MCF 10A (cell line): ENCODE measurements at regions of chr1 and their contacts with region 1.

Region 1: GRCh38 chr1:200302192-200302920 is 107.5 kb downstream of the ZNF281 start:
- DNase-seq: peak; percentile 49
- H3K4me3 Mint-ChIP-seq: peak overlapping the region; percentile 73
- H3K27ac Mint-ChIP-seq: no peak overlapping the region
- H3K4me1 Mint-ChIP-seq: peaks cover 2% of the 10 kb centered on the region
- H3K27me3 Mint-ChIP-seq: no peaks in the 10 kb centered on the region
- CTCF ChIP-seq: no peak

Region 2: DNA sequence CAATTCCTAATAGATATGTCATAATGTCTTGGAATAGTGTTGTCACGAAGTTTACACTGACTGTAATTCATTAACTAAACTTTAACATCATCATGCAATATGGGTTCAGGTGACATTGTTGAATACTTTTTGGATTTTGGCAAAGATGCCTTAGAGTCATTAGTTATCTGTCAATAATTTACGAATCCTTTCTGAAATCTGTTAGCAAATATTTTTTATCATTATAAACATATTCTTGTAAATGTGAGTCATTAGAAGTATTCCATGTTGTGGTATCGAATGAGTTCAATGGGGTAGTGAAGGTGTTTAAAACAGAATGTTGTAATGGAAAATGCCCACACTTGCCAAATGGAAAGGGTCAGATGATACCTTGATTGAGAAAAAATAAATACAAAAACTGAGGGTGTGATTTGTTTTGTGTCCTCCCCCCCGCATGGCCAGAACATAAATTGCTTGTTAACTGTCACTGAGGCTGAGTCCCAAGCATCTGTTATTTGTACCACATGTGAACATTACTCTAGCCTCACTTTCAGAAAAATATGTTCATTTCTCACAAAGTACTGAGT is 280.0 kb before region 1 on chr1:
- CTCF ChIA-PET with region 1: no interaction called
- POLR2A ChIA-PET with region 1: no interaction called
- intact Hi-C with region 1: no loop called
- DNase-seq: no peak
- H3K4me3 Mint-ChIP-seq: no peak overlapping the region
- H3K27ac Mint-ChIP-seq: no peak overlapping the region
- H3K4me1 Mint-ChIP-seq: peaks cover 4% of the 10 kb centered on the region
- H3K27me3 Mint-ChIP-seq: no peaks in the 10 kb centered on the region
- CTCF ChIP-seq: no peak

Region 3: DNA sequence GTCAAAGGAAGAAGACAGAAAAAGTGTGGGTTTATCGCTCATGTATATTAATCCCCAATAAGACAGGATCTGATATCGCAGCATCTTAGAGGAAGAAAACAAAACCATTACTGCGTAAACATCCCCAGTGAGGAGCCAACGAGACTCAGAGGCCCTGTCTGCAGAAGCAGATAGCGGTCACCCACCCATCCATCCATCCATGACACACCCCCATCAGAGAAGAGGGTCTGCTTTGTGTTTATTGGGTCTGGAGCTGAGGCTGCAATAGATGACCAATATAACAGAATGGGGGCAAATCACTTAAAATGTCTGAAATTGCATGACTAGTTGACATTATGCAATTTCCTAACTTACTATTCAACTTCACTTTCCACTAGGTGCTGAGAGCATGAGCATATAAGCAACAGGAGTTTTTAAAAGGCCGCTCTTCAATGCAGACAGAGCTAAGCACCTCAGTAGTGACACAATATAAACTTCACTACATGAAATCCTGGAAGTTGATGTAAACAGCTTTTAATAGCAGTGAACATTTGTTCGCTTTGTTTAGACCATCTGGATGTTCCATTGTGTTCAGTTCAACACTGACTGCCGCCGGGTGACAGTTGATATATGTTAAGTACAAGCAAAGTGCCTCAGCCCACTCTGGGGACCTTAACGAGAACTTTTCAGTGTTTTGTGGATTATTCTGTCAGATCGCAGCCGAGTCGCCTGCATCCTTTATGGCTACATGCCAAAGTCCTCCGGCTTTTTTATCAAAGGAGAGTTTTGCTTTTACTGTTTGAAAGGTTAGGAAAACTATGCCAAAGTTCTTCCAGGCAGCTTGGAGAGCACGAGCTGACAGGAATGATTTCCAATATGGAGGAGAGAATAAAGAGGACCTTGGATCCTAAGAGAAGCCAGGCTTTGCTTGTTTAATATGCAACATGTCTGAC is 60.0 kb before region 1 on chr1:
- CTCF ChIA-PET with region 1: no interaction called
- POLR2A ChIA-PET with region 1: no interaction called
- intact Hi-C with region 1: no loop called
- DNase-seq: no peak
- H3K4me3 Mint-ChIP-seq: no peak overlapping the region
- H3K27ac Mint-ChIP-seq: no peak overlapping the region
- H3K4me1 Mint-ChIP-seq: peaks cover 5% of the 10 kb centered on the region
- H3K27me3 Mint-ChIP-seq: no peaks in the 10 kb centered on the region
- CTCF ChIP-seq: no peak

Region 4: DNA sequence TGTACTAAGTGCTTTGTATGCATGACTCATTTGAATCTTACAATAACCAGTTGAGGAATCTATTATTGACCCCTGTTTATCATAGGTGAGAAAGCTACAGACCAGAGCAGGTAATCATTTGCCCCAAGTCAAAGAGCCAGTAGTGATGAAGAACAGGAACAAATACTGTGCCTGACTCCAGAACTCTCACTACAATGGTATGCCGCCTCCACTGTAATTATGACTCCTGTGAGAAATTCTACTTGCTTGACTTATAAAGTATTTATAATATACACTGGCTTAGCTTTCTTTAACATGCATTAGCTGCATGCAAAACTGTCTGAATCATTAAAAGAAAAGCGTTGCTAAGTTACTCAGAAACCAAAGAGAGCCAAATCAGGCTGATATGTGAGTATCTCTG is 14.9 kb after region 1 on chr1:
- CTCF ChIA-PET with region 1: interaction called, 13 read pairs
- POLR2A ChIA-PET with region 1: interaction called, 4 read pairs
- intact Hi-C with region 1: no loop called
- DNase-seq: no peak
- H3K4me3 Mint-ChIP-seq: no peak overlapping the region
- H3K27ac Mint-ChIP-seq: no peak overlapping the region
- H3K4me1 Mint-ChIP-seq: peaks cover 5% of the 10 kb centered on the region
- H3K27me3 Mint-ChIP-seq: no peaks in the 10 kb centered on the region
- CTCF ChIP-seq: no peak

Region 5: DNA sequence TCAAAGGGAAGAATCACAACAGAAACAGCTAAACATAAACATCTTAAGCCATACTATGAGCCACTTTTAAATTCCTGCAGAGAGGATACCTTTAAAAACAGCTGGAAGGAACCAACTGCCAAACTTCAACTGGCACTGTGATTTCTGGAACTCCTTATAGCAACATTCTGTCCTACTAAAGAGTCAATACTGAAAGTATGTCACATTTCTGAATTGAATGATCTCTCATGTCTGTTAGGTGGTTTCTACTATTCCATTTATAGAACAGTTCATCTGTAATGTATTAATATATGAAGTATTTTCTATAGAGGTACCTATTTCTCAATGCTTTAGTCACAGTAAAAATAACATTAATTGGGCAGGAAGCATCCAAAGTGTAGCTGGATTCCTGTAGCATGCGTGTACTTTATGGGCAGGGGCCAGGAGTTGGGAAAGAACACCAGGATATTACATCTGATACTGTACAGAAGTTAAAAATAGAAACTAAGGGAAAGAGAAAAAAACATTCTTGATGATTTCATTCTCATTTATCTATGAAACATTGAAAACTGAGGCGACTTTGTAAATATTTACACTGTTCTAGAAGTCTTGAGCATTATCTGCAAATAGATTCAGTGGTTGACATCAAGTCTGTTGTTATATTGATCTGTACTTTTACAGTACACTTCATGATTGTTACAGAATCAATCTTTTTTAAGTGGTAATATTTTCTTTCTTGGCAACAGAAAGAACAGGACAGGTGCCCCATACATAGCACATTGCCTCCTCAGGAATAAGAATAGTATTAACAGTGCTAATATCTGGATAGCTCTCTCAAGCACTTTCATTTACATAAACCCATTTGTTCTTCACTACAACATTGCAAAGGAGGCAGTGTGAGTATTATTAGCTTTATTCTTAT is 113.6 kb after region 1 on chr1:
- CTCF ChIA-PET with region 1: interaction called, 4 read pairs
- POLR2A ChIA-PET with region 1: no interaction called
- intact Hi-C with region 1: loop called (anchors 5 kb)
- DNase-seq: peak; percentile 99
- H3K4me3 Mint-ChIP-seq: peak overlapping the region; percentile 20
- H3K27ac Mint-ChIP-seq: peak overlapping the region; percentile 93
- H3K4me1 Mint-ChIP-seq: peaks cover 24% of the 10 kb centered on the region
- H3K27me3 Mint-ChIP-seq: no peaks in the 10 kb centered on the region
- CTCF ChIP-seq: no peak